CD8-positive, alpha-beta T cell (primary cell): ENCODE measurements at regions of chr5 and their contacts with region 1.

Region 1: GRCh38 chr5:151252762-151253604 is at the start of gene GM2A:
- DNase-seq: peak; percentile 95 to 99 (median 98)
- ATAC-seq: peak; percentile 97
- H3K4me3 ChIP-seq: peak within 1 kb of the TSS; percentile 81 to 82
- H3K4me3 Mint-ChIP-seq: peak within 1 kb of the TSS; percentile 92
- H3K27ac ChIP-seq: peak within 1 kb of the TSS; percentile 57 to 77
- H3K27ac Mint-ChIP-seq: peak within 1 kb of the TSS; percentile 93
- H3K4me1 ChIP-seq: peaks cover 25% of the 10 kb centered on the region
- H3K4me1 Mint-ChIP-seq: peaks cover 45% of the 10 kb centered on the region
- H3K27me3 ChIP-seq: no peaks in the 10 kb centered on the region
- H3K27me3 Mint-ChIP-seq: no peaks in the 10 kb centered on the region
- CTCF ChIP-seq: no peak
- total RNA-seq, gene GM2A: 3.4 to 5.0 TPM

Region 2: DNA sequence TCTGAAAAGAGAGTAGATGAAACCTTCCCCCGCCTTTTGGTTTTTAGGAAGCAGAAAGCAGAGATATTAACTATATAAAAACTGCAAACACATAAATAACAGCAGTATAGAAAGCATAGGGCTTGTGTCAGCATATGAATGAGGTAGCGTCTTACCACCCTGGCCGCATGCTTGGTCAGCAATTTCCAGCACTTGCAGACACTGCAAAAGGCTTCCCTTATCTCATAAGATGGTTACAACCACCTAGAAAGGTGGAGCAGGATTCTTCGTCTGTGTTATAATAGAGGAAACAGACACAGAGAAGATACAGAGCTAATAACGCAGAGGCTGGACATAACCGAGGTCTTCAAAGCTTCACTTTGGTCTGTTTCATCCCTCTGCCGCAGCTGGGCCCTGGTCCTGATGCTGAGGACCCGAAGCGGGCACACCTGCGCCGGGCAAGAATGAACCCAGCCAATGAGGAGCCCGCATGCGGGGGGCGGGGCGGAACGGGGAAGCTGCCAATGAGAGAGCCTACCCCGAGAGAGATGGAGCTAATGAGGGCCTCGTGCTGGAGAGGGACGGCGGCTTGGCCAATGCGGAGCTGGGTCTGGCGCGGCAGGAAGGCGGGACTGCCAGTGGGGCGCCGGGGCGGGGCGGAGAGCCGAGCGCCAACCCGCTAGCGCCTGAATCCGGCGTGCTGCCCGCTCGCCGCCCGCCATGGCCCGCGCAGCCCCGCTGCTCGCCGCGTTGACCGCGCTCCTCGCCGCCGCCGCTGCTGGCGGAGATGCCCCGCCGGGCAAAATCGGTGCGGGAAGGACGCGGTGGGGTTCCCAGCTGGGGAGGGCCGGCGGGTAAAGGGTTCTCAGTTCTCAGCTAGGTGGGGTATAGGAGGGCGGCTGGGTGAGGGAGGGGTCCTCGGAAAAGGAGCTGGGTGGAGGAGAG is 1895.4 kb before region 1 on chr5 and contains the start of gene PCYOX1L:
- CTCF ChIA-PET with region 1: no interaction called
- POLR2A ChIA-PET with region 1: no interaction called
- intact Hi-C with region 1: loop called in 1 of 2 experiments (anchors 5 kb)
- DNase-seq: peak; percentile 89 to 99 (median 95)
- ATAC-seq: peak; percentile 96
- H3K4me3 ChIP-seq: peak within 1 kb of the TSS; percentile 83 to 88
- H3K4me3 Mint-ChIP-seq: peak within 1 kb of the TSS; percentile 93
- H3K27ac ChIP-seq: peak within 1 kb of the TSS; percentile 63 to 74
- H3K27ac Mint-ChIP-seq: peak within 1 kb of the TSS; percentile 92
- H3K4me1 ChIP-seq: peaks cover 37% of the 10 kb centered on the region
- H3K4me1 Mint-ChIP-seq: peaks cover 67% of the 10 kb centered on the region
- H3K27me3 ChIP-seq: no peaks in the 10 kb centered on the region
- H3K27me3 Mint-ChIP-seq: no peaks in the 10 kb centered on the region
- CTCF ChIP-seq: no peak
- total RNA-seq, gene PCYOX1L: 18.9 to 21.9 TPM

Region 3: GRCh38 chr5:150339165-150339564 is 913.8 kb before region 1 on chr5:
- CTCF ChIA-PET with region 1: no interaction called
- POLR2A ChIA-PET with region 1: no interaction called
- intact Hi-C with region 1: no loop called
- DNase-seq: no peak
- ATAC-seq: no peak
- H3K4me3 ChIP-seq: no peak overlapping the region
- H3K4me3 Mint-ChIP-seq: no peak overlapping the region
- H3K27ac ChIP-seq: no peak overlapping the region
- H3K27ac Mint-ChIP-seq: no peak overlapping the region
- H3K4me1 ChIP-seq: no peaks in the 10 kb centered on the region
- H3K4me1 Mint-ChIP-seq: peaks cover 5% of the 10 kb centered on the region
- H3K27me3 ChIP-seq: no peaks in the 10 kb centered on the region
- H3K27me3 Mint-ChIP-seq: no peaks in the 10 kb centered on the region
- CTCF ChIP-seq: no peak

Region 4: DNA sequence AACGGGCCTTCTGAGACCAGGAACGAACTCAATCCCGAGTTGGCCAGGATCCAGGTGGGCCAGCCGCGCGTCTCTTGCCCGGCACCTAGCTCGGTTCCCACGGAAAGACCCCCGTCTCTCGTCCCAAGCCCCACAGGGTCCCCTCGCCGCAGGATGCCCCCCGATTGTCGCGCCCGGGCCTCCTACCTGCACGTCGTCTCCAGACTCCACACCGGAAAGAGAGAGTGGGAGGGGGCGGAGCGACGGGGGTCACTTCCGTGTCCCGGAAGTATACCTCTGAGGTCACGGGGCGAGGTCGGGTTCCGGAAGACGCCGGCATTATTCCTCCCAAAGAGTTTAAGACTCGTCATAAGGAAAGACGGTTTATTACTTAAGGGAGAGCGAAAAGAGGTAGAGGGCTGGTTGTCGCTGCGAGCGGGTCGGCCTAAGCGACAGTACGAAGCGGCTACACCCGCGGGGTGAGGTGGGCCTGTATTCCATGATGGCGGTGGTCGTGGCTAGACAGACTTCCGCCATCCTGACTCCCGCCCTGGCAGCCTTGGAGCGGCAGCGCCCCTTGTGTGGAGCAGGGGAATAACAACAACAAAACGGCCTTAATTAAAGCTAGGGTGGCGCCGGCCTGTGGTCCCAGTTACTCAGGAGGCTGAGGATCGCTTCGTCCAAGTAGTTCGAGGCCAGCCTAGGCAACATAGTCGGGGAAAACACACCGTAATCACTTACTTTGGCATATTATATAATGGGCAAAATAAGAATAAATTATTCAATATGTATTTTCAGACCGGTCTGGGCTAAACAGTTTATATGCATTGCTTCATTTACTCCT is 803.3 kb before region 1 on chr5 and contains the start of gene RPS14:
- CTCF ChIA-PET with region 1: no interaction called
- POLR2A ChIA-PET with region 1: interaction called, 3 read pairs
- intact Hi-C with region 1: loop called in 1 of 2 experiments (anchors 5 kb)
- DNase-seq: peak; percentile 90 to 97 (median 95)
- ATAC-seq: peak; percentile 92
- H3K4me3 ChIP-seq: peak within 1 kb of the TSS; percentile 77 to 89
- H3K4me3 Mint-ChIP-seq: peak within 1 kb of the TSS; percentile 100
- H3K27ac ChIP-seq: peak within 1 kb of the TSS; percentile 93 to 98
- H3K27ac Mint-ChIP-seq: peak within 1 kb of the TSS; percentile 100
- H3K4me1 ChIP-seq: peaks cover 22% of the 10 kb centered on the region
- H3K4me1 Mint-ChIP-seq: peaks cover 36% of the 10 kb centered on the region
- H3K27me3 ChIP-seq: no peaks in the 10 kb centered on the region
- H3K27me3 Mint-ChIP-seq: no peaks in the 10 kb centered on the region
- CTCF ChIP-seq: peak; percentile 84
- total RNA-seq, gene RPS14: 5,604 to 5,613 TPM

Region 5: DNA sequence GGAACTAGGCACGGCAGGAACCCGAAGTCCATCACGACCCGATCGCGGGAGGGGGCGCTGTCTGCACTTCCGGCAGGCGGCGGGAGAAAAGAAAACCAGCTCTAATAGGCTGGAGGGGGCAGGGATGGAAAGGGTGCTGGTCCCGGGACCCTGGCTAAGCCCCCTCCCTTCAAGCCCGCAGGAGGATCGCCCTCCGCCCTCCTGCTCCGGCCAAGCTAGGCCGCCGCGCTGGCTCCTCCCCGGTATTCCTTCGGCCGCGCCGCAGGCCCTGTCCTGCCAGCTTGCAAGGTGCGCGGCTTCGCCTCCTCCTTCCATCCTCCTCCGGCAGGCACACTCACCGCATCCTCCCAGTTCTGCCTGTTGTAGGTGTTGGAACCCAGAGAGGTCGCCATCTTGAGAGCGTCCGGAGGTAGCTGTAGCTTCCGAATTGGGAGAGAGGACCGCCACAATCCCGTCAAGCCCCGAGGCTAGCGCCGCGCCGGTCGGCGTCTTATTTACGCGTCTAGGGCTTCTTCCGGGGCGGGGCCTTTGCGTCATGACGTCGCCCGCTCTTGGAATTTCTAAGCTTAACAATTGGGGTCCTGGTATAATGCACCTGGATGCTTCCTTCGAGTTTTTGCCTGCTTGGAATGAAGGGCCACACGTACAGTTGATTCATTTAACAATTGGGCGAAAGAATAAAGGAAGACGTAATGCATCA is 552.2 kb before region 1 on chr5 and contains the start of gene RBM22:
- CTCF ChIA-PET with region 1: no interaction called
- POLR2A ChIA-PET with region 1: no interaction called
- intact Hi-C with region 1: loop called (anchors 1 to 2 kb)
- DNase-seq: peak; percentile 82 to 96 (median 94)
- ATAC-seq: peak; percentile 90
- H3K4me3 ChIP-seq: peak within 1 kb of the TSS; percentile 80 to 81
- H3K4me3 Mint-ChIP-seq: no peak within 1 kb of the TSS
- H3K27ac ChIP-seq: peak within 1 kb of the TSS; percentile 94 to 97
- H3K27ac Mint-ChIP-seq: no peak within 1 kb of the TSS
- H3K4me1 ChIP-seq: peaks cover 19% of the 10 kb centered on the region
- H3K4me1 Mint-ChIP-seq: peaks cover 2% of the 10 kb centered on the region
- H3K27me3 ChIP-seq: no peaks in the 10 kb centered on the region
- H3K27me3 Mint-ChIP-seq: no peaks in the 10 kb centered on the region
- CTCF ChIP-seq: peak; percentile 85
- total RNA-seq, gene RBM22: 119 to 125 TPM

Region 6: DNA sequence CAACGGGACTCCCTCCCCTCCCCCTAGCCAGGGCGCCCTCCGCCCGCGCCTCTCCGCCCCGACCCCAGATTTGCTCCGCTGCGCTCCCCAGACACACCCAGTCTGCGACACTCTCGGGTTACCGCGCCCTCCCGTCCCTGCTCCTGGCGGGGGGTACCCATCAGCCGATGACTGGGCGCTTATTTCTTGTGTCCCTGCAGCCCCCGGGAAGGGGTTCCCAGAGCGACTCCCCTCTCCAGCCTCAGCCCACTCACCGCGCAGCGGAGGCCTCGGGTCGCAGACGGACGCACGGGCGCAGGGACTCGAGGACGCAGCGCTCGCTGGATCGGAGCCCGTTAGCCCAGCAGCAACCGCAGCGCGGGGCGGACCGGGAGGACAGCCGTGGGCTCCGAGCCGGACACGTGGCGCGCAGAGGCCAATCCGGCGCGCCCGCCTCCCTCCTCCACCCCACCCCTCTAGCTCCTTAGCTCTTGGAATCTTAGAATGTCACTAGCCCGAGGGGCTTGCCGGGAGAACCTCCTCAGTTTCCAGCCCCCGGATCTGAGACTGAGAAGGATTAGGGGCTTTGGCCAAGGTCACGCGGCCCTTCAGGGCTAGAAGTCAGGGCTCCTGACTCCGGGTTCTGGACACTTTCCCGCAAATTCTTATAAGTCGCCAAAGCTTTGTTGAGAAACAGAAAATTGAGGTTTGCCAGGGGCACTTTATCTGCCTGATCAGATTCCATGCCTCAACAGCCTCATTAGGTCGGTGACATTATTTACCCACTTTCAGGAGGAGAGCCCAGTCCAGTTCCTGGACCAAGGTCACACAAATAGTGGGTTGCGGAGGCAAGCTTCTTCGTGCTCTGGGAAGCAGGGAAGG is 95.3 kb before region 1 on chr5 and contains the start of gene ANXA6:
- CTCF ChIA-PET with region 1: no interaction called
- POLR2A ChIA-PET with region 1: interaction called, 3 read pairs
- intact Hi-C with region 1: loop called in 1 of 2 experiments (anchors 2 kb)
- DNase-seq: peak in 8 of 9 experiments; percentile 50 to 86 (median 66)
- ATAC-seq: peak; percentile 70
- H3K4me3 ChIP-seq: peak within 1 kb of the TSS; percentile 52 to 94
- H3K4me3 Mint-ChIP-seq: peak within 1 kb of the TSS; percentile 97
- H3K27ac ChIP-seq: peak within 1 kb of the TSS; percentile 68 to 90
- H3K27ac Mint-ChIP-seq: peak within 1 kb of the TSS; percentile 95
- H3K4me1 ChIP-seq: peaks cover 43% of the 10 kb centered on the region
- H3K4me1 Mint-ChIP-seq: peaks cover 65% of the 10 kb centered on the region
- H3K27me3 ChIP-seq: no peaks in the 10 kb centered on the region
- H3K27me3 Mint-ChIP-seq: no peaks in the 10 kb centered on the region
- CTCF ChIP-seq: no peak
- total RNA-seq, gene ANXA6: 83.5 to 89.4 TPM

Region 7: DNA sequence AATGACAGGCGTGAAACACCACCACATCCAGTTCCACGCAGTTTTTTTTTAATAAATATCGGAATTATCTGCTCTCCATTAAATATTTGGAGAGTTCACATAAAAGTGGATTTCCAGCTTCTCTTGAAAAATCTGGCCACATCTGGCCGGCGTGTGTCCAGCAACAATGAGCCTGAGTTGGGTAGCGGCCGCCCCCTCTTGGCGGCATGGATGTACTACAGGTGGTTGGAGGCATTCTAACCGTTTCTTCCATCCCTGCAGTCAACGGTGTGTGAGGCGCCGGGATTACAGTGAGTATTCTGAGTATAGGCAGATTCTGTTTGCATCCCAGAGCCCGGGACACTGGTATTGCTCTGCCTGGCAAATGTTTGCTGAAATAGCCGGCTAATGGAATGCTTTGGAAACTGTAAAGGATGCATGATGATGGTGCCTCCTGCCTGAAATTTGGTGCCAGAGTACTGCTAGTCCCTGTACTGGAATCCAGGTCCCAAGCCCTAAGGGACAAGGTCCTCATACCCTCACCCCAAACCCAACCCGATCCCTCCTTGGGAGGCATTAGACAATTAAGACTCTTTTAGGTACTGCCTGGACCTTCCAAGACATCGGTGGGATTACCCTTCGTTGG is 13.6 kb before region 1 on chr5:
- CTCF ChIA-PET with region 1: interaction called, 15 read pairs
- POLR2A ChIA-PET with region 1: interaction called, 11 read pairs
- intact Hi-C with region 1: loop called in 1 of 2 experiments (anchors 1 kb)
- DNase-seq: peak in 8 of 9 experiments; percentile 38 to 77 (median 63)
- ATAC-seq: peak; percentile 87
- H3K4me3 ChIP-seq: no peak overlapping the region
- H3K4me3 Mint-ChIP-seq: peak overlapping the region; percentile 57
- H3K27ac ChIP-seq: no peak overlapping the region
- H3K27ac Mint-ChIP-seq: no peak overlapping the region
- H3K4me1 ChIP-seq: peaks cover 23% of the 10 kb centered on the region
- H3K4me1 Mint-ChIP-seq: peaks cover 38% of the 10 kb centered on the region
- H3K27me3 ChIP-seq: no peaks in the 10 kb centered on the region
- H3K27me3 Mint-ChIP-seq: no peaks in the 10 kb centered on the region
- CTCF ChIP-seq: peak; percentile 100

Region 8: GRCh38 chr5:151328734-151329133 is 75.8 kb after region 1 on chr5:
- CTCF ChIA-PET with region 1: no interaction called
- POLR2A ChIA-PET with region 1: no interaction called
- intact Hi-C with region 1: no loop called
- DNase-seq: no peak
- ATAC-seq: no peak
- H3K4me3 ChIP-seq: no peak overlapping the region
- H3K4me3 Mint-ChIP-seq: no peak overlapping the region
- H3K27ac ChIP-seq: no peak overlapping the region
- H3K27ac Mint-ChIP-seq: no peak overlapping the region
- H3K4me1 ChIP-seq: no peaks in the 10 kb centered on the region
- H3K4me1 Mint-ChIP-seq: no peaks in the 10 kb centered on the region
- H3K27me3 ChIP-seq: no peaks in the 10 kb centered on the region
- H3K27me3 Mint-ChIP-seq: peaks cover 2% of the 10 kb centered on the region
- CTCF ChIP-seq: no peak

Region 9: GRCh38 chr5:151771259-151772028 is 518.5 kb after region 1 on chr5 and contains the start of gene G3BP1:
- CTCF ChIA-PET with region 1: no interaction called
- POLR2A ChIA-PET with region 1: no interaction called
- intact Hi-C with region 1: loop called (anchors 5 kb)
- DNase-seq: peak; percentile 98 to 100 (median 99)
- ATAC-seq: peak; percentile 76
- H3K4me3 ChIP-seq: peak within 1 kb of the TSS; percentile 70 to 88
- H3K4me3 Mint-ChIP-seq: peak within 1 kb of the TSS; percentile 86
- H3K27ac ChIP-seq: peak within 1 kb of the TSS; percentile 84 to 94
- H3K27ac Mint-ChIP-seq: peak within 1 kb of the TSS; percentile 82
- H3K4me1 ChIP-seq: peaks cover 40% of the 10 kb centered on the region
- H3K4me1 Mint-ChIP-seq: peaks cover 44% of the 10 kb centered on the region
- H3K27me3 ChIP-seq: no peaks in the 10 kb centered on the region
- H3K27me3 Mint-ChIP-seq: no peaks in the 10 kb centered on the region
- CTCF ChIP-seq: peak; percentile 42
- total RNA-seq, gene G3BP1: 89.1 to 91.1 TPM

Region 10: DNA sequence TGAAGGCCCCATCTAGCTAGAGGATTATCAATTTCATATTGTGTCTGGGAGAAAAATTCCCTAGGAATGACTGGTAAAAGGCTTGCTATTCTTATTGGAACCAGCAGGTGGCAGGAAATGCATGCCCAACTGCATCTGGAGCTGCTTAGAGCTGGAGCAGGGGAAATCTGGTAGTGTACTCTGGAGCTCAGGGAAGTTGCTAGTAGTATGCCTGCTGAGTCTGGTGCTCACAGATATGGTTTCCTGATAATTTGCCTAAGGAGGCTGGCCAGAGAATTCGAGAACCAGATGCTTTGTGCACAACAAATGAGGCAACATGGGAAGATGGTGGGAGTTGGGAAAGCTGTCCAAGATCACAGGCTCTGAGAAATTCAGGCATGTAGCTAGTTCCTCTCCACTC is 572.5 kb after region 1 on chr5:
- CTCF ChIA-PET with region 1: no interaction called
- POLR2A ChIA-PET with region 1: no interaction called
- intact Hi-C with region 1: no loop called
- DNase-seq: peak in 5 of 9 experiments; percentile 25 to 62 (median 33)
- ATAC-seq: peak; percentile 31
- H3K4me3 ChIP-seq: no peak overlapping the region
- H3K4me3 Mint-ChIP-seq: no peak overlapping the region
- H3K27ac ChIP-seq: no peak overlapping the region
- H3K27ac Mint-ChIP-seq: no peak overlapping the region
- H3K4me1 ChIP-seq: no peaks in the 10 kb centered on the region
- H3K4me1 Mint-ChIP-seq: peaks cover 4% of the 10 kb centered on the region
- H3K27me3 ChIP-seq: no peaks in the 10 kb centered on the region
- H3K27me3 Mint-ChIP-seq: no peaks in the 10 kb centered on the region
- CTCF ChIP-seq: peak; percentile 66